ENCODE measurements at regions of chr2 and their contacts with region 1.

Region 1: DNA sequence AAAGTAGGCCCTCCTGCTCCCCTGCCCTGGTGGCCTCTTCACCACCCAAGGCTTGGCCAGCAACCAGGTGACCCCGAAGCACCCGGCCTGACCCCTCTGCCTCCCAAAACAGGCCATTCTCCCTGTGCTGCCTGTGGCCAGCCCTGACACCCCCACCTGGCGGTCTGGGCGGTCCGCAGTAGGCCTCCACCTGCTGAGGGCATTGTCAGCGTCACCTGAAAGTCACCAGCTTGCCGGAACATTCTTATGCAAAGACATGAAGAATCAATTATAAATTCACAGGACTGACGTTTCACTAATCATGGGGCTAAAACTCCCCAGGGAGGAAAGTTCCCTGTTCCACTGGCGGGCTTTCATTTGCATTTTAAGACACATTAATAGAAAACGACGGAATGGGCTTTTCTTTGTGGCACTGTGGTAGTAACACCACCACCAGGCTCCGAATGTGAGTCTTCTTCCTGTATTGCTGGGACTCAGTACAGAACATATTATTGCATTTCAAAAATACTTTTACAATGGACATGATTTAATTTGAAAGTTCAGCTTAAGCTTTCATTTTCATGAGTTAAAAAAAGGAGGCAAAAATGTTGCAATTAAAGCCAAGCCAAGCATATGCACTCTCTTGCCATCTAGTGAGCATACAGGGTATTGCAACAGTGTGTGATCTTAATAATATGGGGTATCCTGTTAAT is 57.4 kb downstream of the ADI1 start:
- DNase-seq: peak; percentile 58
- H3K4me3 ChIP-seq: no peak overlapping the region
- H3K27ac ChIP-seq: no peak overlapping the region
- H3K4me1 ChIP-seq: no peaks in the 10 kb centered on the region
- H3K27me3 ChIP-seq: no peaks in the 10 kb centered on the region
- CTCF ChIP-seq: peak; percentile 51 to 77
- POLR2A ChIP-seq: no peak

Region 2: DNA sequence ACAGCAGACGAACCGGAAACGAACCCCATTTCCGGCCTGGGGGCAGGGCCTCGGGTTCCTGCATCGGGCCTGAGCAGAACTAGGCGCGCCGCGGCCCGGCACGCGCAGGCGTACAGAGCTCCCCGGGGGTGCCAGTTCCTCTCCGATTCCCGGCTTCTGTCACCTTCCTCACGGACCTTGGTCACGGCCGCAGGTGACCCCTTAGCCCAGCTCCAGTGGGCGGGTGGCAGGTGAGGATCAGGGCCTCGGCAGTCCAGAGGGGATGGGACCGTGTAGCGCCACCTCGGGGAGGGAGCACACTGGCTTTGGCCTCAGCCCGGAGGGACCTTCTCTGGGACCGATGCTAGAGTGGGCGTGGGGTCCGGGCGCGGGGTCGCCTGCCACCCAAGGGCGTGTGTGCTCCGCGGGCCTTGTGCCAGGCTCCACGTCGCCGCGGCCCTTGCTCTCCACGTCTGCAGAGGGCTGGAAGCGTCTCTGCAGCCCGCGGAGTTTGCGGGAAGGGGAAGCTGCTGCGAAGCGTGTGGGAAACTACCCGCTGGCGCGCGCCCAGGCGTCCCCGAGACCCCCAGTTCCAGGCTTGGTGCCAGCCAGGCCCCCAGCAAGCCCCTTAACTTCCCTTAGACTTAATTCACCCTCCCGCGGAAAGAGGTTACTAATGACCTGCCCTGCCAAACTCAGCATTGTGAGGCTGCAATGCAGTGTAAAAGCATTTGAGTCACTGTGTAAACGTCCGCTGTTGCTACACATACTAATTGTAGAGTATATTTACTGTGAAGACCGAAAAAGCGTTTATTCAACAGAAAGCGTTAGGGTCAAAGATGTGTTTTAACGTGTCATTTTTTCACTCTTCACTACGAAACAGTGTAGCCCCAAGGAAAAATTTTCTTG is 82.1 kb before region 1 on chr2 and contains the start of gene TRAPPC12:
- CTCF ChIA-PET with region 1: interaction called, 6 read pairs
- POLR2A ChIA-PET with region 1: no interaction called
- dilution Hi-C with region 1: no loop called
- intact Hi-C with region 1: loop called (anchors 5 kb)
- DNase-seq: peak; percentile 84
- H3K4me3 ChIP-seq: peak within 1 kb of the TSS; percentile 40 to 83 (median 75)
- H3K27ac ChIP-seq: peak within 1 kb of the TSS; percentile 74
- H3K4me1 ChIP-seq: peaks cover 26% of the 10 kb centered on the region
- H3K27me3 ChIP-seq: no peaks in the 10 kb centered on the region
- CTCF ChIP-seq: peak; percentile 31 to 53
- POLR2A ChIP-seq: peak; percentile 93
- total RNA-seq, gene TRAPPC12: 74.5 and 81.5 TPM in 2 replicates

Region 3: DNA sequence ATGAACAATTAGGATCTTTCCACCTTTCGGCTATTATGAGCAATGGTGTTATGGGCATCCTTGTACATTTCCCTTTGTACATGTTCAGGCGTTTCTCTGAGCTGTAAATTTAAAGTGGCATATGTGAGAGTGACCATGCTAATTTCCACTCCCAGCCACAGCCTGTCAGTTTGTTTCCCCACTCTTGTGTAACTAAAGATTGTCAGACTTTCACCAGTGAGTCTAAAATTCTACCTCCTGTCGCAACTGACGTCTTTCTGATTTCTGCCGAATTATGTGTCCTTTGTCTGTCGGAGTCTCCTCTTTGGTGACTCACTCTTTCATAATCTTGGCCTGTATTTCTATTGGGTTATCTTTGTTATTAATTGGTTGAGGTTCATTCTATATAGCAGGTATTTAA is 31.8 kb before region 1 on chr2:
- CTCF ChIA-PET with region 1: interaction called, 13 read pairs
- POLR2A ChIA-PET with region 1: no interaction called
- dilution Hi-C with region 1: no loop called
- intact Hi-C with region 1: no loop called
- DNase-seq: no peak
- H3K4me3 ChIP-seq: no peak overlapping the region
- H3K27ac ChIP-seq: no peak overlapping the region
- H3K4me1 ChIP-seq: no peaks in the 10 kb centered on the region
- H3K27me3 ChIP-seq: no peaks in the 10 kb centered on the region
- CTCF ChIP-seq: no peak
- POLR2A ChIP-seq: no peak

Region 4: DNA sequence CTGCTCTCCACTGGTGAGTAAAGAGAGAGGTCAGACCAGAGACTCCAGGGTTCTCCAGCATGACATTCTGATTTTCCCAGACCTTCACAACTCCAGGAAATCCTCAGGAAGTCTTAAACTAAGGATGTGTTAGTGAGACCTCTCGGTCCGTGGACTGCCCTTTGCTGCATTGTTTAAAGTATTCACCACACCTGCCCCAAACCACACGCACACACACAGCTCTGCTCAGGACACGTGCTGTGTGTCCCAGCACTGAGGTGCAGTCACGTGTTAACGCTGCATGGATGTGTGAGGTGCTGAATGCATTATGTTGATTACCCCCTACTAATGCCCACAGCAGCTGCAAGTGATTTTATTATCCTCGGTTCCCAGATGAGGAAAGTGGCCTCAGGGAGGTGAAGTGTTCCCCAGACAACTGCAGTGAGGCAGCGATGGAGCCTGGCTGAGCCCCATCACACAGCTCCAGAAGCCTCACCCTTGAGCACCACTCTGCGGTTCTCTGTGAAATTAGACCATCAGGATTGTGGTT is 14.1 kb before region 1 on chr2:
- CTCF ChIA-PET with region 1: interaction called, 19 read pairs
- POLR2A ChIA-PET with region 1: no interaction called
- dilution Hi-C with region 1: no loop called
- intact Hi-C with region 1: no loop called
- DNase-seq: peak; percentile 71
- H3K4me3 ChIP-seq: no peak overlapping the region
- H3K27ac ChIP-seq: no peak overlapping the region
- H3K4me1 ChIP-seq: peaks cover 9% of the 10 kb centered on the region
- H3K27me3 ChIP-seq: no peaks in the 10 kb centered on the region
- CTCF ChIP-seq: no peak
- POLR2A ChIP-seq: no peak

Region 5: DNA sequence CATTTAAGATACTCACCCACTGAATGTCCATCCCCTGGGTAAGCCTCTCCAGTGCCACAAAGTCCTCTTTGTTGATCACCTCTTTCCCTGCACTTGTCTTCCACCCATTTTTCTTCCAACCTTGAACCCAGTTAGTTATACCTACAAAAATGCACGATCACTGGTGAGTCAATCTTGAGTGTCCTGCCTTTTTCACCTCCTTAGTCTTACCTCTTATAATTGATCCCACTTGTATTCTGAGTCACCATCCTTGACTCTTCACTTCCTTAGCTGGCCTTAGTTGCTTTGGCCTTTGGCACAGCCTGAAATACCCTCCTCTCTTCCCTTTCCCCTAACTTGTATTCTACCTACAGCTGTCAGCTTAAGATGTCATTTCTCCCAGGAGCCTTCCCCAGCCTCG is 86.0 kb after region 1 on chr2:
- CTCF ChIA-PET with region 1: no interaction called
- POLR2A ChIA-PET with region 1: no interaction called
- dilution Hi-C with region 1: no loop called
- intact Hi-C with region 1: no loop called
- DNase-seq: no peak
- H3K4me3 ChIP-seq: no peak overlapping the region
- H3K27ac ChIP-seq: no peak overlapping the region
- H3K4me1 ChIP-seq: no peaks in the 10 kb centered on the region
- H3K27me3 ChIP-seq: no peaks in the 10 kb centered on the region
- CTCF ChIP-seq: no peak
- POLR2A ChIP-seq: no peak

Region 6: DNA sequence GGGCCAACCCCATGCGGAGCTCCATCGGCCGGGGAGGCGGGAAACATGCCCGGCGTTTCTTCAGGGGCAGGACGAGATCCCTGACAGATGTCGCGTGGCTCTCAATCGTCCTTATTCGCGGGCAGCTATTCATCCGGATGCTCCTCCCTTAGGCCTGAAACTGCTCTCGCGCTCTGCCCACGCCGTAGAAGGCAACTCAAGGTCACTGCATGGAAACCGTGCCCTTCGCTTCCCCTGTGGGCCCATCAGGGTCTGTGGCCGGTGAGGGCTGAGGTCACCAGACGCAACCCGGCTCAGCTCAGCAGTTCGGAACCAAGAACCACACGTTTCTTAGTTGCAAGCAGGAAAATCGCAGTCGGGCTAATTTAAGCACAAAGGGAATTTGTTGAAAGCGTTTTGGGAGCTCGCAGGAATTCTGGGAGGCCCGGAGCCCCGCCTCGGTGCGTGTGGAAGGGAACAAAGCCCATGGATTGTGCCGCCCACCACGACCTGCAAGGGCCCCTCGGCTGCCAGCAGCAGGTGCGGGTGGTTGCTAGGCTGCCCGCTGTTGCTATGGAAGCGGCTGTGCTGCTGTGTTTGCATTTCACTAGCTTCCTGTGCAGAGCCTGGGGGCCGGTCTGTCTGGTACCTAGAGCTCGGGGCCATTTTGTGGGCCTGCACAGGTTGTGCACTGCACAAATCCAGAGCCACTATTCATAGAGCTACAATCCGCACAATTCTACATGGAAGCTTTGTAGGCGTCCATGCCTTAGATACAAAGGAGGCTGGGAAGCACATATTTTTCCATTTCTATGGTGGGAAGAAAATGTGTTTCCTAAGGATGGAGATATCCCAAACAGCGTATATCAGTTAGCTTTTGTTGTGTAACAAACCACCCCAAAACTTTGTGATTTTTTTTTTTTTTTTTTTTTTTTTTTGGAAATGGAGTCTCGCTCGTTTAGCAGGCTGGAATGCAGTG is 190.0 kb after region 1 on chr2:
- CTCF ChIA-PET with region 1: interaction called, 3 read pairs
- POLR2A ChIA-PET with region 1: no interaction called
- dilution Hi-C with region 1: no loop called
- intact Hi-C with region 1: loop called (anchors 2 kb)
- DNase-seq: peak; percentile 19
- H3K4me3 ChIP-seq: peak overlapping the region in 1 of 3 experiments; percentile 8
- H3K27ac ChIP-seq: no peak overlapping the region
- H3K4me1 ChIP-seq: peaks cover 2% of the 10 kb centered on the region
- H3K27me3 ChIP-seq: no peaks in the 10 kb centered on the region
- CTCF ChIP-seq: no peak
- POLR2A ChIP-seq: no peak